Endothelial cell of umbilical vein (primary cell): ENCODE measurements at regions of chr15 and their contacts with region 1.

Region 1: GRCh38 chr15:92097474-92098178 is 244.1 kb downstream of the SLCO3A1 start:
- DNase-seq: peak; percentile 57
- H3K4me3 ChIP-seq: no peak overlapping the region
- H3K27ac ChIP-seq: no peak overlapping the region
- H3K4me1 ChIP-seq: no peaks in the 10 kb centered on the region
- H3K27me3 ChIP-seq: no peaks in the 10 kb centered on the region
- CTCF ChIP-seq: peak; percentile 68
- POLR2A ChIP-seq: no peak

Region 2: DNA sequence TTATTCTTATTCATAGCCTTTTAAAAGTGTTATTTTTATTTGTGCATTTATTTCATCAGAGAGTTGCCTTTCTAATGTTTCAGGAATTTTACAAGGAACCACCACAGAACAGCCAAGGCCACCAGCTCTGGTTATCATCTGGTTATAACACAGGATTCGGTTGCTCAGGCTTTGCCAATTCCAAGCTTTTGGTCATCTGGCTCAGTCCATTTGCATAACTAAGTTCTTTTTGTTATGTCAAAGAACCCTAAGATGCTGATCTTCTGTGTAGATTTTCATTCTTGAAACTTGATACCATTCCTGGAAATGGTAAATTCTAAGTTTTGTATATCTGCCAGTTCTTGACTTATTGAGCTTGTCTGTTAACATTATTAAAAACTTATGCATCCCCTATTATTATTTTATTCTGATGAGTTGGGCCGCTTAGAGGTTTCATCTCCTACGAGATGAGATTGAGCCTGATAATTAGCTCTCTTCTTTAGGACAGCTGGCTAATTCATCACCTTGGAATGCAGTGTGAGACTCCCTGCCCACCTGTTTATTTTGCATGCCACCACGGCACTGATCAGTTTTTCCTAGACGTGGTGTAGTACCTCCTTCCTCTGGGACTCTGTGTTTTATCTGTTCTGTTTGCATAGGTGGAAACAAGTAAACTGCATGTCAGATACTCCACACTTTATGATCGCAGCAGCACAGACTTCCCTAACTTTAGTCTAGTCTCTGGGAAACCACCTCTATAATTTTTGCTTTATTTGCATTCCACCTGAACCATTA is 20.7 kb after region 1 on chr15:
- CTCF ChIA-PET with region 1: no interaction called
- POLR2A ChIA-PET with region 1: no interaction called
- dilution Hi-C with region 1: no loop called
- intact Hi-C with region 1: no loop called
- DNase-seq: no peak
- H3K4me3 ChIP-seq: no peak overlapping the region
- H3K27ac ChIP-seq: no peak overlapping the region
- H3K4me1 ChIP-seq: no peaks in the 10 kb centered on the region
- H3K27me3 ChIP-seq: no peaks in the 10 kb centered on the region
- CTCF ChIP-seq: no peak
- POLR2A ChIP-seq: no peak

Region 3: GRCh38 chr15:92149029-92149428 is 51.4 kb after region 1 on chr15:
- CTCF ChIA-PET with region 1: no interaction called
- POLR2A ChIA-PET with region 1: no interaction called
- dilution Hi-C with region 1: no loop called
- intact Hi-C with region 1: no loop called
- DNase-seq: no peak
- H3K4me3 ChIP-seq: no peak overlapping the region
- H3K27ac ChIP-seq: no peak overlapping the region
- H3K4me1 ChIP-seq: no peaks in the 10 kb centered on the region
- H3K27me3 ChIP-seq: no peaks in the 10 kb centered on the region
- CTCF ChIP-seq: no peak
- POLR2A ChIP-seq: no peak

Region 4: GRCh38 chr15:92383519-92384326 is 286.1 kb after region 1 on chr15:
- CTCF ChIA-PET with region 1: no interaction called
- POLR2A ChIA-PET with region 1: no interaction called
- dilution Hi-C with region 1: no loop called
- intact Hi-C with region 1: loop called (anchors 1 kb)
- DNase-seq: no peak
- H3K4me3 ChIP-seq: no peak overlapping the region
- H3K27ac ChIP-seq: no peak overlapping the region
- H3K4me1 ChIP-seq: no peaks in the 10 kb centered on the region
- H3K27me3 ChIP-seq: no peaks in the 10 kb centered on the region
- CTCF ChIP-seq: peak; percentile 51 to 57
- POLR2A ChIP-seq: no peak

Region 5: DNA sequence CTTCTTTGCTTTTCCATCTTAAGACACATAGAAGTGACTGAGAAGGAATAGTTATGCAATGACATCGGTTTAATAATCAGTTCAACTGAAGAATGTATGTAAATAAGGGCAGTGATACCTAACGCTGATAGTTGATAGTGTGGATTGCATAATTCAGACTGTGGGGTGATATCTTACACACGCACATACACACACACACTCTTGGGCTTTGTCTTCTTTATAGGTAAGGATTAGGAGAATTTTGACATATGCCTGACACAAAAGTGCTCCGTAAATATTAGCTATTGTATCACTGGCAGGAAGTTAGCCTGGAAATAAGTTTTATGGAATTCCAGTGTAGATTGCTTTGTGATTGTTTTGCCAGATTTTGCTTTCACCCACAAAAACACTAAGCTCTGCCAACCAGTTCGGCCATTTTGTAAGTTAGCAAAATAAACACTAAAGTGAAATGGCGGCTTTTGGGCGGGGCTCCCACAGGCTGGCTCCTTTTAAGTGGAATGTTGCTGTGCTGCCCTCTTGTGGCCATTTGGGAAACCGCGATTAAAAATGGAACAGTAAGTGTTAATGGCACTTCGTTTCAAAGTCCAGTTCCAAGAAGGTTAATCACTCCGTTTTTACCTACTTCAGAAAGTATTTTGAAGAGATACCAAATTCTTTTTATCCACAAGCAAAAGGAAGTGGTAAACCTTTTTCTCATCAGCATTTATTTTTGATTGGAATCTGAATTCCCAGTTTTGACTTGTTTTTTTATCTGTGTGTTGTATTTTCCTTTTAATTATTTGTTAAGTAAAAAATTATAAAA is 820.2 kb after region 1 on chr15:
- CTCF ChIA-PET with region 1: interaction called, 3 read pairs
- POLR2A ChIA-PET with region 1: no interaction called
- dilution Hi-C with region 1: no loop called
- intact Hi-C with region 1: loop called (anchors 5 kb)
- DNase-seq: peak; percentile 98
- H3K4me3 ChIP-seq: peak overlapping the region in 1 of 3 experiments; percentile 42
- H3K27ac ChIP-seq: peak overlapping the region; percentile 87
- H3K4me1 ChIP-seq: peaks cover 56% of the 10 kb centered on the region
- H3K27me3 ChIP-seq: no peaks in the 10 kb centered on the region
- CTCF ChIP-seq: peak; percentile 69 to 82
- POLR2A ChIP-seq: peak; percentile 54